ENCODE measurements at regions of chr12 and their contacts with region 1.

Region 1: DNA sequence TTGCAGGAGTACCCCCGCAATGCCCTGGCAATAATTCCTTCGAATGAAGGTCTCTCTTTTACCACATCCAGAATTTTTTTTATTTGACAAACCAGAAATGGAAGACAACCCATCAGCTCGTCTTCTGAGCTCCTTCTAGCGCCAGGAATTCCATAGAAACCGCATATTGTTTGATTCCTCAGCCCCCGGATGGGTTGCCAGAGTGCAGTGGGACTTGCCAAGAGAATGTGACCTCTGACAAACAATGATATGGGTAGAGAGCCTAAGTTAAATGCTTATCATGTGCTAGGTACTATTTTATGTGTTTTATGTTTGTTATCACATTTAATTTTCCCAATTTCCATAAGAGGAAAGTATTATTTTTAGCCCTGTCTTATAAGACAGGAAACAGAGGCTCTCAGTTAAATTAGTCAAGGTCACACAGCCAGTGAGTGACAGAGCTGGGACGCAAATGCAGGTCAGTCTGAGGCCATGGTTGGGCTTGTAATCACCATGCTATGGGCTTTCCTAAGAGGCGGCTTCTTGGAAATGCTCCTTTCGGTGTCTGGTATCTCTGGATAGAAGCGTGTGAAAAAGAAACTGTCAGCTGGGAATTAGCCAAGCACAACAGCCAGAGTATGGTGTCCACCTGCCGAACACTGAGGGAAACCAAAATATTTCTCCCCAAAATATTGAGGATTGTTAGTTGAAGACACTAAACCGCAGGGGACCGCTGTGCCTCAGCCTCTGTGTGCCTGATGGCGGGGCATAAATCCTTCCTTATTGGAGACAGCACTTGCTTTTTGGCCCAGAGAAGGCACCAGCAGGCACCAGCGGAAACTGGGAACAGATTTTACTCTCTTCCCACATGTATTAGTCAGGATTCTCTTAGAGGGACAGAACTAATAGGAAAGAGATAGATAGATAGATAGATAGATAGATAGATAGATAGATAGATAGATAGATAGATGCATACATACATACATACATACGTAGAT is 29.4 kb upstream of the ETFBKMT start:
- DNase-seq: no peak
- H3K4me3 ChIP-seq: no peak overlapping the region
- H3K27ac ChIP-seq: no peak overlapping the region
- H3K4me1 ChIP-seq: no peaks in the 10 kb centered on the region
- H3K27me3 ChIP-seq: no peaks in the 10 kb centered on the region
- CTCF ChIP-seq: no peak

Region 2: DNA sequence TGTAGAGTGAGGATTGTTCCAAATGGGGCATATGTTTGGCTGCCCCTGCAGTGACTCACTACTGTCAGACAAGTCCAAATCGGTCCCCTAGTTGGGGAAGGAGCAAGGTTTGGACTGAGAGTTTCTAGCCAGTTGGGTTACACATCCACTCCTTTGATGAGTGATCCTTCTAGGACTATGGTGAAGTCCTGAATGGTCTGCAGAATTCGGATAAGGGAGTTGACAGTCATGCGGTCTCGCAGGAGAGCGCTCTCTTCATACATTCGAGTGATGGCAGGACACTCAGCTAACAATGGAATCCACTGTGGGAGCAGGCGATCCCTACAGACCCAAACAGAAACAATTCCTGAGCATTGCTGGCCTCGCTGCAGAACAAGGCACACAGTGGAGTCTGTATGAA is 242.6 kb before region 1 on chr12:
- CTCF ChIA-PET with region 1: no interaction called
- dilution Hi-C with region 1: loop called (anchors 25 kb)
- in situ Hi-C with region 1: no loop called
- intact Hi-C with region 1: no loop called
- DNase-seq: peak; percentile 39
- H3K4me3 ChIP-seq: no peak overlapping the region
- H3K27ac ChIP-seq: no peak overlapping the region
- H3K4me1 ChIP-seq: peaks cover 4% of the 10 kb centered on the region
- H3K27me3 ChIP-seq: no peaks in the 10 kb centered on the region
- CTCF ChIP-seq: no peak

Region 3: DNA sequence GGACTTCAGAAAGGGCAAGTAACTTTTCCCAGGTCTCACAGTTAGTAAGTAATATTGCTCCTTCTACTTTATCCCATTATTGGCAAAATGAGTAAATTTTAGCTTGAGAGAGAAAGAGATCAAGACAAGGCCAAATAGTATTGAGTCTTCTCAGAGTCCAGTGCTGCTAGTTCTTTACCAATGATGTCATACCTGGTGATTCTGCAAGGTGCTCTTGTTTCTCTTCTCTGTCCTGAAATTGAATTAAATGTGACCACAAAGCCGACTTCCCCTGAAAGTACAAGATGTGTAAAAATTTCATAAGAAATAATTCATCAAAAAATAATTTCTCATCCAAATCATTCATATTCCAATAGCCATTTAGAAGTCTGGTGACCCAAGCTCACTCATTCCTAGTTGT is 206.6 kb before region 1 on chr12:
- CTCF ChIA-PET with region 1: no interaction called
- dilution Hi-C with region 1: no loop called
- in situ Hi-C with region 1: no loop called
- intact Hi-C with region 1: loop called (anchors 5 kb)
- DNase-seq: no peak
- H3K4me3 ChIP-seq: no peak overlapping the region
- H3K27ac ChIP-seq: no peak overlapping the region
- H3K4me1 ChIP-seq: no peaks in the 10 kb centered on the region
- H3K27me3 ChIP-seq: no peaks in the 10 kb centered on the region
- CTCF ChIP-seq: no peak

Region 4: DNA sequence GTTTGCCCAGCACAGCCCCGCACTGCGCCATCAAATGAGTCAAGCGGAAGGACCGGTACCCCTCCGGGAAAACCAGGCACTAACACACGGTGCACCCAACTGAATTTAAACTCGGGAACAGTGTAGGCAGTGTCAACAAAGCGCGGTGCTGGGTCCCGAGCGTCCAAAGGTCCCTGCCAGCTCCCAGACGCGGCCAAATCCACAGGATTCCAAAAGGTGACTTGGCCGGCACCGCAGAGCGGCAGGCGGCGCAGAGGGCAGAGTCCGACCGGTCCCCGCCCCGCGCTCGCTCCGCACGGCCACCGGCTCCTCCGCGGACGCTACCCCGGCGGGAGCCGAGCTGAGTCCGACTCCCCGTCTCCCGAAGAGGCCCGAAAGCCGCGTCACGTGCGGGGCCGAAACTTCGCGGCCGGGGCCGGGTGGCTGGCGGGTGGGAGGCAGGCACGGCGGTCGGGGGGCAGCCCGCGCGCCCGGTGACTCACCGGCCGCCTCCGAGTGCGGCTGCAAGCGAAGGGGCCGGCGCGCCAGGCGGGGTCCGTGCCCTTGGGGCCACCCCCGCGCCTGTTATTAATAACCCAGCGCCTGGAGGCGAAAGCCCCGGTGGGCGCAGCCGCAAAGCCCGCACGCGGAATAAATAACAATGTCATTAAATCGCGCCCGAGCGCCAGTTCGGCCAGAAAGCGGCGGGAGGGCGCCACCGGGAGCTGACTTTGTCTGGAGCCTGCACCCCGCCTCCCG is 40.0 kb before region 1 on chr12:
- CTCF ChIA-PET with region 1: no interaction called
- dilution Hi-C with region 1: no loop called
- in situ Hi-C with region 1: no loop called
- intact Hi-C with region 1: no loop called
- DNase-seq: peak; percentile 52
- H3K4me3 ChIP-seq: peak overlapping the region; percentile 61 to 90 (median 70)
- H3K27ac ChIP-seq: peak overlapping the region; percentile 47
- H3K4me1 ChIP-seq: peaks cover 12% of the 10 kb centered on the region
- H3K27me3 ChIP-seq: no peaks in the 10 kb centered on the region
- CTCF ChIP-seq: peak in 1 of 2 donors; percentile 19

Measured in mammary epithelial cell (primary cell).